G401 (cell line): ENCODE measurements at regions of chr2 and their contacts with region 1.

Region 1: GRCh38 chr2:96514521-96514920 is 9.4 kb upstream of the NEURL3 start:
- DNase-seq: no peak

Region 2: GRCh38 chr2:96407041-96407918 is 107.2 kb before region 1 on chr2:
- in situ Hi-C with region 1: loop called (anchors 10 kb)
- DNase-seq: peak; percentile 87

Region 3: GRCh38 chr2:96656540-96656939 is 142.0 kb after region 1 on chr2:
- in situ Hi-C with region 1: no loop called
- DNase-seq: no peak